Gastrocnemius medialis (tissue), 4 donors: ENCODE measurements at regions of chr18 and their contacts with region 1.

Region 1: GRCh38 chr18:36419905-36420531 is 122.5 kb downstream of the FHOD3 start:
- DNase-seq: peak in 1 of 2 donors; percentile 72
- ATAC-seq: peak; percentile 92 to 93
- H3K4me3 ChIP-seq: peak overlapping the region in 2 of 4 donors; percentile 6 to 19
- H3K27ac ChIP-seq: peak overlapping the region; percentile 68 to 81 (median 79)
- H3K4me1 ChIP-seq: peaks cover 14 to 28% of the 10 kb centered on the region in 2 donors
- H3K27me3 ChIP-seq: no peaks in the 10 kb centered on the region
- CTCF ChIP-seq: peak in 4 of 5 experiments; percentile 16 to 47 (median 28)
- POLR2A ChIP-seq: peak in 1 of 2 donors; percentile 27

Region 2: DNA sequence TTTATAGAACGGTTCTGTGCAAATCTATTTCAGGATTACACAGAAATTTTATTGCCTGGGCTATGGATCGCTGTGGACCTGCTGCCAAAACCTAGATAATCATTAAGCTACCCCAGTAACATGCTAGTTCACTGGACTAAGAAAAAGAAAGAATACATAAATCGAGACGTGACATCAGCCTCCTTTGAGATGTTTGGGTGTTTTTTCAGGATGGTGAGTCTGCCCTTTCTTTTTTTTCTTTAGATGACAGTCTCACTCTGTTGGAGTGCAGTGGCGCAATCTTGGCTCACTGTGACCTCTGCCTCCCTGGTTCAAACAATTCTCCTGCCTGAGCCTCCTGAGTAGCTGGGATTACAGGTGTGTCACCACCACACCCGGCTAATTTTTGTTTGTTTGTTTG is 70.5 kb before region 1 on chr18:
- in situ Hi-C with region 1: no loop called
- intact Hi-C with region 1: loop called (anchors 2 kb)
- DNase-seq: peak in 1 of 2 donors; percentile 55
- ATAC-seq: peak; percentile 31 to 44
- H3K4me3 ChIP-seq: no peak overlapping the region
- H3K27ac ChIP-seq: peak overlapping the region; percentile 56 to 79 (median 75)
- H3K4me1 ChIP-seq: peaks cover 25 to 28% of the 10 kb centered on the region in 2 donors
- H3K27me3 ChIP-seq: no peaks in the 10 kb centered on the region
- CTCF ChIP-seq: no peak
- POLR2A ChIP-seq: no peak

Region 3: DNA sequence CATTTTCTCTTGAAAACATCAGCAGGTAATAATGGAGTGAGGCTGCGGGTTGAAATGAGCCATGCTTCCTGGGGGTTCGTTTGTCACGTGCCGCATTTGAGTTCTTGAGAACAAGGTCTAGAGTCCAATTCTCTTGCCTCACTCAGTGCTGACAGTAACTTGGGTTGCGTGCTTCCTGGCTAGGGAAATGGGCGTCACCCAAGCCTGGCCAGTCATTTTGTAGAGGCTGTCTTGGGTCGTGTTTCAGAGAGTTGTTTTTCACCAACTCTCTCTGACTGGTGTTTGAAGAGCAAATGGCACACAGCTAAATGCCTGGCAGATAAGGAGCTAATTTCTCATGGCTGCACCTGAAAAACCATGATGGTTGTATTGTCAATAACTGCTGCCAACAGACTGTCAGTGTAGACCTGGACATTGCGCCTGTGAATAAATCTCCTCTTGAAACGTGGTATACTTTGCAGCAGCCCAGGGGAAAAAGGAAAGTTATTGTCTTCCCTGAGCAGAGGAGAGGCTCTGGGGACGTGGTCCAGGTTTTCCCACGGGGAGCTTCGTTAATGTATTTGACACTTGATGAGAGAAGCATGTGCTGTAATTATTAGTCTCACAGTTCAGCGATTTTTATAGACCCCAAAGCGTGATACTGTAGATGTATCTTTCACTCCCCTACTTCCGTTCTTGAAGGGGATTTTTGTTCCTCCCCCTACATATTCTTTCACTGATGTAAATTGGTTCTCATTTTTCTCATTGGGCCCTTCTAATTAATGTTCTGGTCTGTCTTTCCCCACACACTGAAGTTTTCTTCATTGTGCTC is 73.5 kb after region 1 on chr18:
- in situ Hi-C with region 1: no loop called
- intact Hi-C with region 1: loop called (anchors 5 kb)
- DNase-seq: peak; percentile 51 to 85
- ATAC-seq: peak; percentile 98 to 99
- H3K4me3 ChIP-seq: peak overlapping the region; percentile 19 to 50 (median 42)
- H3K27ac ChIP-seq: peak overlapping the region; percentile 61 to 81 (median 77)
- H3K4me1 ChIP-seq: peaks cover 22 to 37% of the 10 kb centered on the region in 2 donors
- H3K27me3 ChIP-seq: no peaks in the 10 kb centered on the region
- CTCF ChIP-seq: no peak
- POLR2A ChIP-seq: peak; percentile 13 to 31

Region 4: DNA sequence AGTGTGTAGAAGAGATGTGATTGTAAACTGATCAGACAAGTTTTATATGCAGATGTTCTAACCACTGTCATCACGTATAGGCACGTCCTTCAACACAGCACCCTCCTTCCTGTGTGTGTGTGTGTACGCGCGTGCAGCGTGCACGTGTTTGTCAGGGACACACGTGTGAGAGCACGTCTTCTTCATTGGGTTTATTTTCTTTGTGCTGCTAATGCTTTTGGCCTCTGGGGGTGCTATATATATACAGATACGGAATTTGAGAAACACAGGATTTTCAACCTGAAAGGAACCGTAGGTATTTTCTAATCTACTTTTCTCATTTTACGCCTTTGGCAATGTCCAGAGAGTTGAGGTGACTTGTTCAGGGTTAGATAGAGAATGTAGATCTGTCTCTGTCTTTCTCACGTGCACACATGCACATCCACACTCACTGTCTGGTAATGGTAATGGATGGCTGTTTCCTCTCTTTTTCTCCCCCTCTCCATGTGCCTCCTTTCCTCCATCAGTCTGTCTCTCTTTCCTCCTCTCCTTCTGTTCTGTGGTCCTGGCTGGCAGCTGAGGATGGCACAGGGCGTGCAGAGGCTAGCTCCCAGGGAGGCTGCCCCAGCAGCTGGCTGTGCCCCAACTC is 1159.0 kb after region 1 on chr18:
- in situ Hi-C with region 1: no loop called
- intact Hi-C with region 1: no loop called
- DNase-seq: no peak
- ATAC-seq: no peak
- H3K4me3 ChIP-seq: no peak overlapping the region
- H3K27ac ChIP-seq: no peak overlapping the region
- H3K4me1 ChIP-seq: no peaks in the 10 kb centered on the region
- H3K27me3 ChIP-seq: peaks cover 0 to 18% (median 3%) of the 10 kb centered on the region in 3 donors
- CTCF ChIP-seq: peak in 2 of 5 experiments; percentile 12 to 27
- POLR2A ChIP-seq: no peak